ENCODE measurements at regions of chr2 and their contacts with region 1.

Region 1: DNA sequence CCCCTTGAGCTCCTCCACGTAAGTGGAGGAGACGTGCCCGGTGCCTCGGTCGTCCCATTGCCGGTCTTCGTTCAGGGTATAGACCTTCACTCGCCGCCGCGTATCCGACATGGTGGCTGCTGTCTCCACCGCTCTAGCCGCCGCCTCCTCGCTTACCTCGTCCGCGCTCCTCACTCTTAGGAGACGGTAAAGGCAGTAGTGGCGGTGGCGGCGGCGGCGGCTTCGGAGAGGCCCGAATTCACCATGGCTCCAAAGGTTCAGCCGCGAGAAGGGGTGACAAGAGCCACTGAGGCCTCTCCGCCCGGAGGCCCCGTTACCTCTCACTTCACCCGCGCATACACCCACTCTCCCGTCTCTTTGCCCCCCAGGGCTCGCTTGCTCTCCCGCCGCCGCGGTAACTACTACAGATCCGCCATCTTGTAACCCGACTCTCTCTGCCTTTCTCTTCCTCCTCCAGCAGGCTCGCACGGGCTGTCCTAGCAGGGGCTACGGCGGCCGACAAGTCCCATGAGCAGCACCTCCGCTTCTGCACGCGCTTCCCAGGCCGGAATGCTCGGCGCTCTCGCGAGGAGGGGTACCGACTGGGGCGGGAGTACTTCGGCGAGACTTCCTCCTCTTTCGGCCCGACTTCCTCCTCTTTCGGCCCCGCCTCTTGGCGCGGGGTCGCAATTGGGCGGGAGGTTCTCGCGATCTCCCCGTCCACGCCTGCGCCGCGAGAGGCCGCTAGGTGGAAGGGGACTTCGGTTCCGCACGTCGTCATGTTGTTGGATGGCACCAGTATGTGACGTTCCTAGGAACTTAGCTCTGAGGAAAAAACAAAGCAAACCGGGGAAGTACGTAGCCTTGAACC is at the start of gene PPP4R3B:
- DNase-seq: peak; percentile 99
- H3K4me3 Mint-ChIP-seq: no peak within 1 kb of the TSS
- H3K27ac Mint-ChIP-seq: no peak within 1 kb of the TSS
- H3K4me1 Mint-ChIP-seq: peaks cover 12% of the 10 kb centered on the region
- H3K27me3 Mint-ChIP-seq: no peaks in the 10 kb centered on the region
- CTCF ChIP-seq: peak; percentile 8
- total RNA-seq, gene PPP4R3B: 97.2 and 97.4 TPM in 2 replicates

Region 2: GRCh38 chr2:55590810-55591440 is 26.5 kb before region 1 on chr2:
- CTCF ChIA-PET with region 1: interaction called, 6 read pairs
- POLR2A ChIA-PET with region 1: interaction called, 19 read pairs
- intact Hi-C with region 1: no loop called
- DNase-seq: peak; percentile 78
- H3K4me3 Mint-ChIP-seq: no peak overlapping the region
- H3K27ac Mint-ChIP-seq: peak overlapping the region; percentile 12
- H3K4me1 Mint-ChIP-seq: peaks cover 5% of the 10 kb centered on the region
- H3K27me3 Mint-ChIP-seq: no peaks in the 10 kb centered on the region
- CTCF ChIP-seq: no peak

Region 3: DNA sequence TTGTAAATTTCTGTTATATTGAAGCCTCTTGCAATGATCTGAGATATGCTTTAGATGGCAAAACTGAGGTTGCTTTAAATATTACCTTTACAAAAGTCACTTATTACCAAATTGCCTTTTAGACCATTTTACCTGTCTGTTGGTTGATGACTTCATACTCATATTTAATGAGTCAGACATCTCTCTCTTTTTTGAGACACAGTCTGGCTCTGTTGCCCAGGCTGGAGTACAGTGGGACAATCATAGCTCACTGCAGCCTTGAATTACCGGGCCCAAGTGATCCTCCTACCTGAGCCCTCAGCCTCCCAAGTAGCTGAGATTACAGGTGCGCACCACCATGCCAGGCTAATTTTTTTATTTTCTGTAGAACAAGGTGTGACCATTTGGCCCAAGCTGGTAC is 11.5 kb after region 1 on chr2:
- CTCF ChIA-PET with region 1: interaction called, 3 read pairs
- POLR2A ChIA-PET with region 1: interaction called, 12 read pairs
- intact Hi-C with region 1: no loop called
- DNase-seq: no peak
- H3K4me3 Mint-ChIP-seq: no peak overlapping the region
- H3K27ac Mint-ChIP-seq: no peak overlapping the region
- H3K4me1 Mint-ChIP-seq: peaks cover 6% of the 10 kb centered on the region
- H3K27me3 Mint-ChIP-seq: no peaks in the 10 kb centered on the region
- CTCF ChIP-seq: no peak

Region 4: GRCh38 chr2:55636831-55637230 is 19.4 kb after region 1 on chr2:
- CTCF ChIA-PET with region 1: interaction called, 5 read pairs
- POLR2A ChIA-PET with region 1: interaction called, 10 read pairs
- intact Hi-C with region 1: no loop called
- DNase-seq: no peak
- H3K4me3 Mint-ChIP-seq: no peak overlapping the region
- H3K27ac Mint-ChIP-seq: no peak overlapping the region
- H3K4me1 Mint-ChIP-seq: no peaks in the 10 kb centered on the region
- H3K27me3 Mint-ChIP-seq: no peaks in the 10 kb centered on the region
- CTCF ChIP-seq: no peak